MCF 10A (cell line): ENCODE measurements at regions of chr22 and their contacts with region 1.

Region 1: DNA sequence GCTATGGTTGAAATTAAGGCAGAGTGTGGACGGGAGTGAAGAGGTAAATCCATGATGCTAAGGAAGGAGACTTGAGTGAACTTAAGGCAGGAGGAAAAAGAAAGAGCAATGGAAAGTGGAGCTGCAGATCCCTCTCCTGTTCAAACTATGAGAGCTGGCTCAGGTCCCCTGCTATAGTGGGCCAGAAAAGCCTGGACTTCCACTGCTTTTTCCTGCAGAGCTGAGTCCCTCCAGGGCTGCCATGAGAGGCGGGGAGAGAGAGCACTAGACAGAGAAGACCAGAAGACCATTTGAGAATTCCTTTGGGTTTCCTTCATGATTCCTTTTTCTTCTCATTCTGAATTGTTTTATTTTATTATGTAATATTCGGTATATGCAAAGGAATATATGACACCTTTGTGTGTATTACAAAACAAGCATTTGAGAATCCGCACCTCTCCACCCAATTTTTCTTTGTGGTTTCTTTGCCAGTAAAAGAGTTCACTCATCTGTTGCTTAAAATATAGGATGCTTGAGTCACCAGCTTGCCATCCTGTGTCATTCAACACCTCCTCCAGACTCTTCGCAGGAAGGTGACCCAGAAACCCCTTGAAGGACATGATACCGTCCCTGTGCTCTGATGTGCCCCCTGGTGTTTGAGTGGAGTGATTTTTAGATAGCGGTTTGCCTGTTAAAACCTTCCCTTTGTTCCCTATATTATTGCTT is 24.4 kb downstream of the SREBF2 start:
- DNase-seq: peak; percentile 94
- H3K4me3 Mint-ChIP-seq: peak overlapping the region; percentile 43
- H3K27ac Mint-ChIP-seq: peak overlapping the region; percentile 81
- H3K4me1 Mint-ChIP-seq: peaks cover 29% of the 10 kb centered on the region
- H3K27me3 Mint-ChIP-seq: no peaks in the 10 kb centered on the region
- CTCF ChIP-seq: peak; percentile 48

Region 2: GRCh38 chr22:41822317-41823060 is 34.8 kb before region 1 on chr22:
- CTCF ChIA-PET with region 1: interaction called, 5 read pairs
- POLR2A ChIA-PET with region 1: interaction called, 3 read pairs
- intact Hi-C with region 1: loop called (anchors 5 kb)
- DNase-seq: peak; percentile 71
- H3K4me3 Mint-ChIP-seq: no peak overlapping the region
- H3K27ac Mint-ChIP-seq: peak overlapping the region; percentile 1
- H3K4me1 Mint-ChIP-seq: no peaks in the 10 kb centered on the region
- H3K27me3 Mint-ChIP-seq: no peaks in the 10 kb centered on the region
- CTCF ChIP-seq: peak; percentile 51

Region 3: DNA sequence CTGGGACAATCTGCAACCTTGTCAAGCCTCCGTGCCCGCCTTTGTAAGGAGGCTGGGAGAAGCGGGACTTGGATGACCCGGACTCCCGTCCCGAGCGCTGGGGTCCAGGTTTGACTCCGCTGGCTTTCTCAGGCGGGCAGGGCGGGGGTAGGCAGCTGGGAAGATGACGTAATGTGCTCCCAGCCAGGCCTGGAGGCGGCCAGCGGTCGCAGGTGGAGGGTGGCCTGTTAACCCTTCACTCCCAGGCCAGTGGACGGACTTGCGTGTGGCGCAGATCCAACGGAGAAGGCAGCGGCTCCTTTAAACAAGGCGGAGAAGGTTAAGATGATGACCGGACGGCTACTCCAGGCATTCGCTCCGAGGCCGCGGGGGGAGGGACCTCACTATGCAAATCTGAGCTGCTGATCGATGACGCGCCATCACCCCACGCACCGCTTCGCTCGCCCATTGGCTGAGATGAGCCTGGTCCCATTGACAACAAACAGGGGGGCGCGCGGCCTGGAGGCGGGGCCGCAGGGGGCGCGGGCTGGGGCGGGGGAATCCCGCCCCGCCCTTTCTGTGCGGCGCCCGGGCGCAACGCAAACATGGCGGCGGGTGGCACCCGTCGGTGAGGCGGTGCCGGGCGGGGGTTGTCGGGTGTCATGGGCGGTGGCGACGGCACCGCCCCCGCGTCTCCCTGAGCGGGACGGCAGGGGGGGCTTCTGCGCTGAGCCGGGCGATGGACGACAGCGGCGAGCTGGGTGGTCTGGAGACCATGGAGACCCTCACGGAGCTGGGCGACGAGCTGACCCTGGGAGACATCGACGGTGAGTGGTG is 24.5 kb before region 1 on chr22 and contains the start of gene SREBF2:
- CTCF ChIA-PET with region 1: interaction called, 4 read pairs
- POLR2A ChIA-PET with region 1: interaction called, 57 read pairs
- intact Hi-C with region 1: loop called (anchors 1 kb)
- DNase-seq: peak; percentile 100
- H3K4me3 Mint-ChIP-seq: peak within 1 kb of the TSS; percentile 82
- H3K27ac Mint-ChIP-seq: peak within 1 kb of the TSS; percentile 98
- H3K4me1 Mint-ChIP-seq: peaks cover 17% of the 10 kb centered on the region
- H3K27me3 Mint-ChIP-seq: no peaks in the 10 kb centered on the region
- CTCF ChIP-seq: no peak
- total RNA-seq, gene SREBF2: 88.4 and 104 TPM in 2 replicates

Region 4: DNA sequence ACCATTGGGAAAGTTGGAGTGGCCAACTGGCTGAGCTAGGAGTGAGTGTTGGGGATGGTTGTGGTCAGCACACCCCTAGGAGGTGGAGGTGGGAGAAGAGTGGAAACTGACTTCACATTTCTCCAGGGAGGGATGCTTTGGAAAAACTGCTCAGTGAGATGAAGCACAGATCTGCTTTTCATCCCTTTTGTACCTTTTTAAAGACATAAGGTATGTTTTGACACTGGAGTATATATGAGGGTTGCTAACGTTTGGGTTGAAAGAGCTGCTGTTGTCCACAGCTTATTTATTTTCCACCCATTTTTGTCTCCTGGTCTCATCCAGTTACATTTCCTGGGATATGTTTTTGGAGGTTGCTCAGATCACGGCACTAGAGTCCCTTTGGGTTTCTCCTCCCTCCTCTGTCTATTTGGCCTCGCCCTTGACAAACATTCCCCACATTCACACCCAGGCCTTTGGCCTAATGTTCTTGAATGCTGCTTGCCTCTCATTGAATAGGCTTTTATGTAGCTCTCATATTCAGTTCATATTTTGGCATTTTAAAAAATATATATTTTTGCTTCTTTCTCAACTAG is 16.1 kb before region 1 on chr22:
- CTCF ChIA-PET with region 1: interaction called, 5 read pairs
- POLR2A ChIA-PET with region 1: interaction called, 41 read pairs
- intact Hi-C with region 1: no loop called
- DNase-seq: no peak
- H3K4me3 Mint-ChIP-seq: no peak overlapping the region
- H3K27ac Mint-ChIP-seq: peak overlapping the region; percentile 86
- H3K4me1 Mint-ChIP-seq: peaks cover 57% of the 10 kb centered on the region
- H3K27me3 Mint-ChIP-seq: no peaks in the 10 kb centered on the region
- CTCF ChIP-seq: no peak